ENCODE measurements at regions of chr3 and their contacts with region 1.

Region 1: DNA sequence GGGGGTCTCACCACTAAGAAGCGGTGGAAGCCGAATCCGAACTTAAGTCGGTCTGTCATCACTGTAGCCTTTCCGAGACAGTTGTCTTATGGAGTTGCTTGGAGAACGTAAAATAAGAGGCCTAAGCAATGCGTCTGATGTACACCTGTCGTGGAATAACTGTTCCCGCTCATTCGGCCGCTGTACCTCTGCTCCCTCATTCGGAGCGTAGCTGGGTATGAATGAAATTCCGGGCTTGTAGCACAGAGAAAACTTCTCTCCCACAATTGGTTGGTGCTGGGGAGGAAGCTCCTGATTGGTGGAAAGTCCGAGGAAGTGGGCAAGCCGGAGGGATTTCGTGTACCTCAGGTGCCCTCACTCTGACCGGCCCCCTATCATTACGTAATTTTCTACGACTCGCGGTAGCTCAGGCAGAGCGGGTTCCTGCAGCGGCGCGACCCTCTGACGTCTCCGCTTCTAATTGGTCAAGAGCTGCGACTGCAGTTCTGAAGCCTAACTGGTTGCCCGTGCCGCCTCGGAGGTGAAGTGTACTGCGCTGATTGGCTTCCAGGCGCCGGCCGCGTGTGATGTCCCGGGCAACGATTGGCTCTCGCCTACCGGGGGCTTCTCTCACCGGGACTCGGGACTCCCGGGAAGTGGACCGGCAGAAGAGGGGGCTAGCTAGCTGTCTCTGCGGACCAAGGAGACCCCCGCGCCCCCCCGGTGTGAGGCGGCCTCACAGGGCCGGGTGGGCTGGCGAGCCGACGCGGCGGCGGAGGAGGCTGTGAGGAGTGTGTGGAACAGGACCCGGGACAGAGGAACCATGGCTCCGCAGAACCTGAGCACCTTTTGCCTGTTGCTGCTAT is at the start of gene DNAJB11:
- DNase-seq: peak; percentile 100
- ATAC-seq: peak; percentile 91
- H3K4me3 Mint-ChIP-seq: peak within 1 kb of the TSS; percentile 93
- H3K27ac Mint-ChIP-seq: peak within 1 kb of the TSS; percentile 95
- H3K4me1 Mint-ChIP-seq: peaks cover 54% of the 10 kb centered on the region
- H3K27me3 Mint-ChIP-seq: no peaks in the 10 kb centered on the region
- CTCF ChIP-seq: no peak
- total RNA-seq, gene DNAJB11: 30.0 to 31.5 TPM

Region 2: GRCh38 chr3:185595526-185595925 is 974.8 kb before region 1 on chr3:
- CTCF ChIA-PET with region 1: no interaction called
- POLR2A ChIA-PET with region 1: no interaction called
- intact Hi-C with region 1: no loop called
- DNase-seq: no peak
- ATAC-seq: no peak
- H3K4me3 Mint-ChIP-seq: no peak overlapping the region
- H3K27ac Mint-ChIP-seq: peak overlapping the region; percentile 79
- H3K4me1 Mint-ChIP-seq: peaks cover 8% of the 10 kb centered on the region
- H3K27me3 Mint-ChIP-seq: no peaks in the 10 kb centered on the region
- CTCF ChIP-seq: no peak

Region 3: DNA sequence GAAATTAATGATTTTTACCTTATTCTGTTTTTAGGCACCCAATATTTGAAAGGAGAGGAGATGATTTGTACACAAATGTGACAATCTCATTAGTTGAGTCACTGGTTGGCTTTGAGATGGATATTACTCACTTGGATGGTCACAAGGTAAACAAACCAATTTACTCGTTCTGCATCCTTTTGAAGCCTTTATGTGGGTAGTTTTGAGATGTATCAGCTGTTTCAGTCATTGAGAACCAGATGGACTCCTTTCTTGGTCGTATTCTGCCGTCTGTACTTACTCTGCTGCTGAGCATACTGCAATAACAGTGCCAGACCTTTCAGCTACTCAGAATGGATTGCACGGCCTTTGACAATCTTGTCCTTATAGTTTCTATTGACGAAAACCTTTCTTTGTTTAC is 13.5 kb after region 1 on chr3:
- CTCF ChIA-PET with region 1: interaction called, 4 read pairs
- POLR2A ChIA-PET with region 1: interaction called, 65 read pairs
- intact Hi-C with region 1: no loop called
- DNase-seq: no peak
- ATAC-seq: no peak
- H3K4me3 Mint-ChIP-seq: no peak overlapping the region
- H3K27ac Mint-ChIP-seq: no peak overlapping the region
- H3K4me1 Mint-ChIP-seq: peaks cover 6% of the 10 kb centered on the region
- H3K27me3 Mint-ChIP-seq: no peaks in the 10 kb centered on the region
- CTCF ChIP-seq: no peak

Measured in activated CD8-positive, alpha-beta T cell treated with anti-CD3 and anti-CD28 coated beads for 36 hours (primary cell).